Endothelial cell of umbilical vein (primary cell): ENCODE measurements at regions of chr2 and their contacts with region 1.

Region 1: DNA sequence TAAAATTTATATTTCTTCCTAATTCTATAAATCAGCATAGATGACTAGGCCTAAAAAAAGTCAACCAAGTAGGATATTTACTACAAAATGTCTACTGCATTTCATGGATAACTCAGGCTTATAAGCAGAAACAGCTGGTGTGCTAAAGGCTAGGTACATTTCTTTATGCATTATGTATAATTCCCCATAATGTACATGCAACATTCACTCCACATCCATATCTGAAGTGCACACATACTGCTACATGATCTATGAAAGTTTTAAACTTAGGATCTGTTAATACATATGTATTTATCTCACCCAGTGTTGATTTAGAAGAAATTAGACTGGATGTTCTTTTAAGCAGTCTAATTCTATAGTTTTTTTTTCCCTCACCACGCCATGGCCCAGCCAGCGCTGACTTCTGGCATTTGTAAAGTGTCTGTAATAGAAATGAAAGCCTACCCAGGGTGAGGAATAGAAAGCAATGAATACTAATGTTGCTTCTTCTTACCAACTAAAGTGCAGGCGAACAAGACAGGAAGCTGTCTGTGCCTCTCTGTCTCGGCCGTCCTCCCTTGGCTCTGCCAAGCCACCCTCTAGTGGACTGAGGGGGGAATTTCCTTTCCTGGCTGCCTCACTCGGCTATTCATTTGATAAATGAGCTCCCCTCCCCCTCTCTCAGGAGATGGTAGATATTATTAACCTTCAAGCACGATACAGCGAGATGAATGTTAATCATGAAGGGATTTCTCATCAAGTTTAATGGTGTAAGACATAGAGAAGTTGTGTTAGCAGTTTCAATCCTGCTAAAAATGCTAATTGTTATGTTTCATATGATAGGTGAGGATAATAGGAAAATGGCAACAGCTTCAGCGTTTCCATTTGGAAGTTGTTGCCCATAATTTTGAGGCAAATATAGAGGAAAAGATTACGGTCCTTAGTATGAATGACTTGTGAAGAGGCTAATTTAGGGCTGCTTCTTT is 384.5 kb downstream of the MTX2 start:
- DNase-seq: peak; percentile 86
- H3K4me3 ChIP-seq: no peak overlapping the region
- H3K27ac ChIP-seq: no peak overlapping the region
- H3K4me1 ChIP-seq: peaks cover 7% of the 10 kb centered on the region
- H3K27me3 ChIP-seq: peaks cover 0 to 8% of the 10 kb centered on the region in 2 experiments
- CTCF ChIP-seq: peak; percentile 69 to 76
- POLR2A ChIP-seq: no peak

Region 2: DNA sequence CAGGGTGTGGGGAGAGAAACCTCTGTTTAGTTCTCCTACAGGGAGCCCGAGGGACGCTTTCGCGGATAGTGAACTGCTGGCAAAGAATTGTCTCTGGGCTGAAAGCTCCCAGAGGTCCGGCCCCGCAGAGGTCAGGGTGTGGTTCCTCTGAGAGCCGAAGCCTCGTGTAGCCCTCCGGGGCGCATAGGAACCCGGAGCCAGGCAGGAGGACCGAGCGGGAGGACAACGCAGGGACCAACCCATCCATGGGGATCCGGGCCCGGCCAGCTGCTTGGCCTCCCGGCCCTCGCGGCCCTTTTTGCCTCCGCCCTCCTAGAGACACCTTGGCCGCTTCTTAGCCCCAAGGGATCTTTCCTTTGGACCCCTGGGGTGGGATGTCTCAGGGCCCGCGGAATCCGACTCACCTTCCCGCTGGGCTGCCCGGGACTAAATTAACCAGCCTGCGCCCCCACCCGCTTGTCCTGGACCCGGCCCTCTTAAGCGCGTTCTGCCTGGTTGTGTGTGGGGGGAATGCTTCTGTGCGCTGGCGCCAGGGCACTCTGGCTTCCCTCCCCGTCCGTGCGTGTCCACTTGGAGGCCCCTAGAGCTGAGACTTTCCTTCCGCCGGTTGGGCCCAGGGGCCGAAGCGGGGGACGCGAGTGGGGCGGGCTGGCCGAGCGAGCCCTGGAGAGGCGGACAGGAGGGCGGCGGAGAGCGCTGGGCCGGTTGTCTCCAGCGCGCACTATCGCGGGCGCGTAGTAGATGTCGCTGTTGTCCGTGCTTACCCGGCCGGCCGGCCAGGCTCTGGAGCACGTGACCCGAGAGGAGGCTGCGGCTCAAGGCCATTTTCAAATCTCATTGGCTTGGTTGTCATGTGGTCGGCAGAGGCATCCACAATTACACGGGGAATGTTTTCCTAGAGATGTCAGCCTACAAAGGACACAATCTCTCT is 537.6 kb before region 1 on chr2 and contains the start of gene HOXD10:
- CTCF ChIA-PET with region 1: interaction called, 28 read pairs
- POLR2A ChIA-PET with region 1: no interaction called
- dilution Hi-C with region 1: no loop called
- intact Hi-C with region 1: loop called (anchors 1 kb)
- DNase-seq: peak; percentile 78
- H3K4me3 ChIP-seq: peak within 1 kb of the TSS in 1 of 3 experiments; percentile 10
- H3K27ac ChIP-seq: no peak within 1 kb of the TSS
- H3K4me1 ChIP-seq: peaks cover 4% of the 10 kb centered on the region
- H3K27me3 ChIP-seq: peaks cover 86 to 98% of the 10 kb centered on the region in 2 experiments
- CTCF ChIP-seq: peak; percentile 59 to 78
- POLR2A ChIP-seq: no peak
- total RNA-seq, gene HOXD10: not detected in 2 replicates

Region 3: GRCh38 chr2:176187899-176188773 is 465.6 kb before region 1 on chr2 and contains the start of gene HOXD1:
- CTCF ChIA-PET with region 1: interaction called, 3 read pairs
- POLR2A ChIA-PET with region 1: no interaction called
- dilution Hi-C with region 1: no loop called
- intact Hi-C with region 1: loop called (anchors 5 kb)
- DNase-seq: peak; percentile 83
- H3K4me3 ChIP-seq: peak within 1 kb of the TSS; percentile 86 to 96 (median 93)
- H3K27ac ChIP-seq: peak within 1 kb of the TSS; percentile 74
- H3K4me1 ChIP-seq: peaks cover 33% of the 10 kb centered on the region
- H3K27me3 ChIP-seq: no peaks in the 10 kb centered on the region
- CTCF ChIP-seq: no peak
- POLR2A ChIP-seq: peak; percentile 86
- total RNA-seq, gene HOXD1: 10.4 and 14.1 TPM in 2 replicates

Region 4: DNA sequence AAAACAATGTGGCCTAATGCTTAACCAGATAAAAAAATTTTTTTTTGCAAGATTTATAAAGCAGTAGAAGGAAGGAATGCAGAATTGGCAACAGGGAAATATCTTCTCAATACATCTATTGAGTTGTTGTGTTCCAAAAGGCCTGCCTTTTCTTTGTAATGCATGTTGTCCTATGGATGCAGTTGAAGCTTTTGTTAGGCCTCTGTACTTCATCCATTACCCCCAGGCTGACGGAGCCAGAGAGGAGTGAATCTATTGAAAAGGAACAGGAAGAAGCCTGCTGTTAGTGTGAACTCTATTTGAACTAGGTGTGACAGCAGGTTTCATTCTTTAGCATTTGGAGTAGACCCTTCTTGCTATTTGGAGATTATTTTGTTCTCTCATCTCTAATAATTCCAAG is 328.0 kb before region 1 on chr2:
- CTCF ChIA-PET with region 1: no interaction called
- POLR2A ChIA-PET with region 1: no interaction called
- dilution Hi-C with region 1: no loop called
- intact Hi-C with region 1: no loop called
- DNase-seq: peak; percentile 15
- H3K4me3 ChIP-seq: no peak overlapping the region
- H3K27ac ChIP-seq: no peak overlapping the region
- H3K4me1 ChIP-seq: no peaks in the 10 kb centered on the region
- H3K27me3 ChIP-seq: no peaks in the 10 kb centered on the region
- CTCF ChIP-seq: no peak
- POLR2A ChIP-seq: no peak

Region 5: DNA sequence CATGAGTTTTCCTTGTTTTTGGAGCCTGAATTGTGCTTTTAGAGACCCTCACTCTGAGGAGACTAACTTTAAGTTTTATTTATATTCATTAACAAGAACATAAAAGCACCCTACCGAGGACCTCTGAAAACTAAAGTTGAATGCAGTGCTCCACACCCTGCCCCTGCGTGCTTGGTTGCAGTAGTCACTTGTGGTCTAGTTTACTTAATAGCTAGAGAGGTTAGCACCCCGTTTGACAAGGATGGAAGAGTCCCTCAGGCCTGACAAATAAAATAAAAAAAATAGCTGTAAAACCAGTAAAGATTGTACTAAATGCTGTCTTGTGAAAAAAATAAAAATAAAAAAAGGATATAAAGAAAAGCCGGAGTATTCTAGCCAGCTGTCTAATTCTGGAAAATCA is 10.7 kb after region 1 on chr2:
- CTCF ChIA-PET with region 1: interaction called, 19 read pairs
- POLR2A ChIA-PET with region 1: no interaction called
- dilution Hi-C with region 1: no loop called
- intact Hi-C with region 1: no loop called
- DNase-seq: no peak
- H3K4me3 ChIP-seq: no peak overlapping the region
- H3K27ac ChIP-seq: no peak overlapping the region
- H3K4me1 ChIP-seq: no peaks in the 10 kb centered on the region
- H3K27me3 ChIP-seq: peaks cover 0 to 5% of the 10 kb centered on the region in 2 experiments
- CTCF ChIP-seq: no peak
- POLR2A ChIP-seq: no peak

Region 6: DNA sequence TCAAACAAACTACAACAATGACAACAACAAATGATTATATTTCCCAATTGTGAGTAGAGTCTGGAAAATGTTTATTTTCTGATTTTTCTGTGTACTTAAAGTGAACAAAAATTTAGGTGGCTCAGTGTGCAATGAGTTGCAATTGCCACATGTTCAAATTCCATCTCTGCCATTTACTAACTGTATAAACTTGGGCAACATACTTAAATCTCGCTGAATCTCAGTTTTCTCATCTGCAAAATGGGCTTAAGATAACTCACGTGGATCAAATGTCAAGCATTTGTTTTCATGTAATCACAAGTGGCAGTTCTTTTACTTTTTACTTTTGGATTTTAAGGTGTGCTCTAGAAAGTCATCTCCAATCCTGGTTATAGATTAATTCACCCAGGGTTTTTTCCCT is 142.1 kb after region 1 on chr2:
- CTCF ChIA-PET with region 1: no interaction called
- POLR2A ChIA-PET with region 1: no interaction called
- dilution Hi-C with region 1: no loop called
- intact Hi-C with region 1: no loop called
- DNase-seq: no peak
- H3K4me3 ChIP-seq: no peak overlapping the region
- H3K27ac ChIP-seq: no peak overlapping the region
- H3K4me1 ChIP-seq: no peaks in the 10 kb centered on the region
- H3K27me3 ChIP-seq: peaks cover 0 to 4% of the 10 kb centered on the region in 2 experiments
- CTCF ChIP-seq: no peak
- POLR2A ChIP-seq: no peak

Region 7: GRCh38 chr2:176821345-176821744 is 167.6 kb after region 1 on chr2:
- CTCF ChIA-PET with region 1: interaction called, 10 read pairs
- POLR2A ChIA-PET with region 1: no interaction called
- dilution Hi-C with region 1: no loop called
- intact Hi-C with region 1: no loop called
- DNase-seq: no peak
- H3K4me3 ChIP-seq: no peak overlapping the region
- H3K27ac ChIP-seq: no peak overlapping the region
- H3K4me1 ChIP-seq: no peaks in the 10 kb centered on the region
- H3K27me3 ChIP-seq: peaks cover 13 to 19% of the 10 kb centered on the region in 2 experiments
- CTCF ChIP-seq: peak in 1 of 2 donors; percentile 15
- POLR2A ChIP-seq: no peak

Region 8: GRCh38 chr2:177763532-177764265 is 1109.9 kb after region 1 on chr2:
- CTCF ChIA-PET with region 1: interaction called, 4 read pairs
- POLR2A ChIA-PET with region 1: no interaction called
- dilution Hi-C with region 1: no loop called
- intact Hi-C with region 1: loop called (anchors 5 kb)
- DNase-seq: peak; percentile 70
- H3K4me3 ChIP-seq: no peak overlapping the region
- H3K27ac ChIP-seq: no peak overlapping the region
- H3K4me1 ChIP-seq: peaks cover under 1% of the 10 kb centered on the region
- H3K27me3 ChIP-seq: no peaks in the 10 kb centered on the region
- CTCF ChIP-seq: peak; percentile 82 to 90
- POLR2A ChIP-seq: no peak